ENCODE measurements at regions of chr10 and their contacts with region 1.

Region 1: DNA sequence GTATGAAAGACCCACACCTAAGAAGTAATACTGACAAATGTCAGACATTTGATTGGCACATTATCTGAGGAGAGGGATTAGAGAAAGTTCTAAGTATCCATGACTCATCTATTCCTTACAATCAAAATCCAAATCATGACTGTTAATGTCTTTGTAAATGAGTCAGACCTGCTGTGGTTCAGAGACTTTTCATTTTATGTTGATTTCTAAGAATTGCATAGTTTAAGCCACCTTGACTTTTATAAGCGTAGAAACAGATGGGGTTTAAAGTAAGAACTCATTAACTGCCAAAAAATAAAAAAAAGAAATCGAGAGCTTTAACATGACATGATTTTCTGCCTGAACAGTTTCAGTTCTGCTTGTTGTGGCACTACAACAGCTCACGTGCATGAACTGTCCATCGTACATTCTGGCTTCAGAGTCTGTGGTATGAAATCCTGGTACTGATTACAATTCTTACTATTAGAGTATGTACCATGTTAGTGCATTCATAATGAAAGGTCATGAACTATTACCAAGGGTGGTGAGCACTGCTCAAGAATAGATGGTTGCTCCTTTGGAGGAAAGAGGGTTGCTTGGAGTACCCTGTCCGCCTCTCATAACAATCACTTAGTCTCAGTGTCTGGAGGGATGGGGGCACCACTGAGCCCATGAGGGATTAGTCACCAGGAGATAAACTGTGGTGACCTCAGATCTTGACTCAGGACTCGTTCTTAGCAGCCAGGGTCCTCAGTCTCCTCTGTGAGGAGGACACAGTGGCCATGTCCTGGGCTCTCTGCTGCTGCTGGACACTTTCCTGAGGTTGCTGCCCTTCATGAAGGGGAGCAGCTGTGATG is 42.2 kb downstream of the ACSM6 start:
- DNase-seq: no peak
- H3K4me3 ChIP-seq: no peak overlapping the region
- CTCF ChIP-seq: no peak
- POLR2A ChIP-seq: no peak

Region 2: DNA sequence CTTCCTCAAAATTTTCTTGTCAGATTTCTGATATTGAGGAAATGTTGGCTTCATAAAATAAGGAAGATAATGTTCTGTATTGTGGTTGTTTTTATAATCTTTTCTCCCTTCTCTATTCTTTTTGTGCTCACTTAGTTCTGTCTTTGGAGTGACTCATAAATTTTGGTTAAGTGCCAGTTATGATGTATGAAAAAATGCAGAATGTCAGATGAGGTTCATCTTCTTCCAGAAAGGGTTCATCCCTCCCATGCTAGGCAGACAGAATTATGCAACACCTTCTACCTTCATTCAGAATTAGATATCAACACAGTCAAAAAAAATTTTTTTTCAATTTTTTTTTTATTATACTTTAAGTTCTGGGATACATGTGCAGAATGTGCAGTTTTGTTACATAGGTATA is 510.4 kb before region 1 on chr10:
- intact Hi-C with region 1: no loop called
- DNase-seq: no peak
- H3K4me3 ChIP-seq: no peak overlapping the region
- CTCF ChIP-seq: no peak
- POLR2A ChIP-seq: no peak

Region 3: GRCh38 chr10:95183271-95184230 is 52.7 kb before region 1 on chr10:
- intact Hi-C with region 1: loop called (anchors 10 kb)
- DNase-seq: peak; percentile 59 to 94
- H3K4me3 ChIP-seq: peak overlapping the region; percentile 48
- CTCF ChIP-seq: no peak
- POLR2A ChIP-seq: no peak